ENCODE measurements at regions of chrX and their contacts with region 1.

Region 1: DNA sequence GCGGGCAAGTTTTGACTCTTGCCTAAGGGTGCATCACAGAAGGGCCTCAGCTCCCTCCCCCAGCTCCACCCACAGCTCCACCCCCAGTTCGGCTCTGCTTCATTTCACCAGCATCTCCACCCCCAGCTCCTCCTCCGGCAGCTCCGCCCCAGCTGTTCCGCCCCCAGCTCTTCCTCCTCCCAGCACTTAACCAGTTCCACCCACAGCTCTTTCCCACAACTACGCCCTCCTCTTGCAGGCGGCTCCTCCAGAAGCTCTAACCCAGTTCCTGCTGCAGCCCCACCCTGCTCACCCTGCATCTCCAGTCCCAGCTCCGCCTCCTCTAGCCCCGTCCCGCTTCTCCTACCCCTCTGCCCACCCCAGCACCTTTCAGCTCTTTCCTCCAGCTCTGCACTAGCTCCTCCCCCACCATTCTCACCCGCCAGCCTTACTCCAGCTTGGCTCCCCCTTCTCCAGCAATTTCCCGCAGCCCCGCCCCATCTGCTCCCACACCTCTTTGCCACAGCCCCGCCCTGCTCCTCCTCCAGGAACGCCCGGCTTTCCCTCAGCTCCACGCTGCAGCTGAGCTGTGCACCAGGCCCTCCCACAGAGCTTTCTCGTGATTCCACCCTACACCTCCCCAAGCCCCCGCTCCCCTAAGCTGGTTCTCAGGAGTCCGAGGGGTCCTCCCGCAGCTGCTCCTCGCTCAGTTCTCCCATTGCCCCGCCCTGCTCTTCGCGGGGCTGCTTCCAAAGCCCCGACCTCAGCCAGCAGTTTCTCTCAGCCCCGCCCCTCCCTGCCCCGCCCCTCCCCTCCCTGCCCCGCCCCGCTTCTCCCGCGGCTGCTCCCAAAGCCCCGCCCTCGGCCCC is 1.3 kb upstream of the EOLA1 start:
- DNase-seq: peak; percentile 82 to 94 (median 91)
- H3K4me3 ChIP-seq: peak overlapping the region in 1 of 2 donors; percentile 67
- H3K4me3 Mint-ChIP-seq: peak overlapping the region; percentile 88 to 93 (median 90)
- H3K27ac ChIP-seq: peak overlapping the region; percentile 64
- H3K27ac Mint-ChIP-seq: peak overlapping the region; percentile 90 to 99 (median 97)
- H3K4me1 ChIP-seq: peaks cover 11% of the 10 kb centered on the region
- H3K4me1 Mint-ChIP-seq: peaks cover 6 to 16% (median 12%) of the 10 kb centered on the region in 4 donors
- H3K27me3 ChIP-seq: no peaks in the 10 kb centered on the region
- H3K27me3 Mint-ChIP-seq: no peaks in the 10 kb centered on the region

Region 2: DNA sequence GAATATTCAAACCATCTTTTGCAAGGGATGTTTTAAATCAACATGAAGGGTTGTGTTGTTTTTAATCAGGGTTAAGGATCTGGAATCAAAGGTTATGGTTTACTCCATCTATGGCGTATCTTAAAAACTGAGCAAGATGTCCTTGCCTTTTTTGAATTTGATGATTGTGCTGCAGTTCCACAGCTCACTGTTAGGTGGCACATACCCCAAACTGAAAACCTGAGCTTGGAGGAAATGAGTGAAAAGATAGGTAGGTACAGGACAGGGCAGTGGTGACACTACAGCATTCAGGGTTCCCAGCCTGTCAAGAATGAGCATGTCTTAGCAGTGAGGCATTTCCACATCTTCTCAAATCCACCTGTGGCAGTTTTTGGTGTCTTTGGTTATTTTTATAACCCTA is 11.8 kb before region 1 on chrX:
- CTCF ChIA-PET with region 1: interaction called, 56 read pairs
- POLR2A ChIA-PET with region 1: interaction called, 35 read pairs
- intact Hi-C with region 1: loop called (anchors 1 kb)
- DNase-seq: peak; percentile 54 to 61 (median 57)
- H3K4me3 ChIP-seq: no peak overlapping the region
- H3K4me3 Mint-ChIP-seq: peak overlapping the region in 3 of 8 donors; percentile 13 to 57 (median 33)
- H3K27ac ChIP-seq: no peak overlapping the region
- H3K27ac Mint-ChIP-seq: peak overlapping the region; percentile 66 to 92 (median 89)
- H3K4me1 ChIP-seq: peaks cover 31% of the 10 kb centered on the region
- H3K4me1 Mint-ChIP-seq: peaks cover 5 to 33% (median 13%) of the 10 kb centered on the region in 4 donors
- H3K27me3 ChIP-seq: no peaks in the 10 kb centered on the region
- H3K27me3 Mint-ChIP-seq: no peaks in the 10 kb centered on the region

Region 3: GRCh38 chrX:149570672-149571071 is 31.2 kb after region 1 on chrX:
- CTCF ChIA-PET with region 1: no interaction called
- POLR2A ChIA-PET with region 1: no interaction called
- intact Hi-C with region 1: no loop called
- DNase-seq: no peak
- H3K4me3 ChIP-seq: no peak overlapping the region
- H3K4me3 Mint-ChIP-seq: no peak overlapping the region
- H3K27ac ChIP-seq: no peak overlapping the region
- H3K27ac Mint-ChIP-seq: no peak overlapping the region
- H3K4me1 ChIP-seq: no peaks in the 10 kb centered on the region
- H3K4me1 Mint-ChIP-seq: no peaks in the 10 kb centered on the region
- H3K27me3 ChIP-seq: no peaks in the 10 kb centered on the region
- H3K27me3 Mint-ChIP-seq: no peaks in the 10 kb centered on the region

Region 4: GRCh38 chrX:149682956-149683947 is 143.7 kb after region 1 on chrX:
- CTCF ChIA-PET with region 1: no interaction called
- POLR2A ChIA-PET with region 1: no interaction called
- intact Hi-C with region 1: no loop called
- DNase-seq: no peak
- H3K4me3 ChIP-seq: no peak overlapping the region
- H3K4me3 Mint-ChIP-seq: no peak overlapping the region
- H3K27ac ChIP-seq: no peak overlapping the region
- H3K27ac Mint-ChIP-seq: no peak overlapping the region
- H3K4me1 ChIP-seq: no peaks in the 10 kb centered on the region
- H3K4me1 Mint-ChIP-seq: no peaks in the 10 kb centered on the region
- H3K27me3 ChIP-seq: no peaks in the 10 kb centered on the region
- H3K27me3 Mint-ChIP-seq: no peaks in the 10 kb centered on the region

Region 5: DNA sequence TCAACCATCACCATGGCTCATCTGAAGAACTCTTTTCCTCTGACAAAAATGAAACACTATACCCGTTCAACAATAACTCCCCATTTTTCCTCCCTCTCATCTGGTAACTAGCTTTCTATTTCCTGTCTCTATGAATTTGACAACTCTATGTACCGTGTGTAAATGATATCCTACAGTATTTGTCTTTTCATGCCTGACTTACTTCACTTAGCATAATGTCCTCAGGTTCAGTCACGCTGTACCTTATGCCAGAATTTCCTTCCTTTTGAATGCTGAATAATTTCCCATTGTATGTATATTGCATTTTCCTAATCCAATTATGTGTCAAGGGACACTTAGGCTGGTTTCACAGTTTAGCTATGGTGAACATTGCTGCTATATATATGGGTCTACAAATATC is 260.4 kb after region 1 on chrX:
- CTCF ChIA-PET with region 1: no interaction called
- POLR2A ChIA-PET with region 1: no interaction called
- intact Hi-C with region 1: no loop called
- DNase-seq: no peak
- H3K4me3 ChIP-seq: no peak overlapping the region
- H3K4me3 Mint-ChIP-seq: peak overlapping the region in 6 of 8 donors; percentile 3 to 65 (median 30)
- H3K27ac ChIP-seq: no peak overlapping the region
- H3K27ac Mint-ChIP-seq: peak overlapping the region in 3 of 7 donors; percentile 38 to 54 (median 52)
- H3K4me1 ChIP-seq: peaks cover 22% of the 10 kb centered on the region
- H3K4me1 Mint-ChIP-seq: peaks cover 20 to 31% (median 25%) of the 10 kb centered on the region in 4 donors
- H3K27me3 ChIP-seq: no peaks in the 10 kb centered on the region
- H3K27me3 Mint-ChIP-seq: no peaks in the 10 kb centered on the region

Region 6: GRCh38 chrX:149938427-149939270 is 399.1 kb after region 1 on chrX and contains the start of gene EOLA2:
- CTCF ChIA-PET with region 1: interaction called, 30 read pairs
- POLR2A ChIA-PET with region 1: interaction called, 83 read pairs
- intact Hi-C with region 1: no loop called
- DNase-seq: peak; percentile 89 to 97 (median 95)
- H3K4me3 ChIP-seq: peak within 1 kb of the TSS; percentile 22 to 66
- H3K4me3 Mint-ChIP-seq: peak within 1 kb of the TSS; percentile 80 to 97 (median 93)
- H3K27ac ChIP-seq: peak within 1 kb of the TSS; percentile 90
- H3K27ac Mint-ChIP-seq: peak within 1 kb of the TSS; percentile 93 to 100 (median 99)
- H3K4me1 ChIP-seq: peaks cover 11% of the 10 kb centered on the region
- H3K4me1 Mint-ChIP-seq: peaks cover 3 to 16% (median 8%) of the 10 kb centered on the region in 4 donors
- H3K27me3 ChIP-seq: no peaks in the 10 kb centered on the region
- H3K27me3 Mint-ChIP-seq: no peaks in the 10 kb centered on the region
- total RNA-seq, gene EOLA2: 38.1 to 41.1 TPM